ENCODE measurements at regions of chr3 and their contacts with region 1.

Region 1: GRCh38 chr3:31981206-31982181 is at the starts of genes OSBPL10 and ZNF860:
- DNase-seq: peak; percentile 72
- H3K4me3 Mint-ChIP-seq: peak within 1 kb of the TSS; percentile 88
- H3K27ac Mint-ChIP-seq: peak within 1 kb of the TSS; percentile 74
- H3K4me1 Mint-ChIP-seq: peaks cover 28% of the 10 kb centered on the region
- H3K27me3 Mint-ChIP-seq: peaks cover 19% of the 10 kb centered on the region
- total RNA-seq, gene OSBPL10: 14.5 and 14.9 TPM in 2 replicates
- total RNA-seq, gene ZNF860: 0.19 and 0.33 TPM in 2 replicates

Region 2: DNA sequence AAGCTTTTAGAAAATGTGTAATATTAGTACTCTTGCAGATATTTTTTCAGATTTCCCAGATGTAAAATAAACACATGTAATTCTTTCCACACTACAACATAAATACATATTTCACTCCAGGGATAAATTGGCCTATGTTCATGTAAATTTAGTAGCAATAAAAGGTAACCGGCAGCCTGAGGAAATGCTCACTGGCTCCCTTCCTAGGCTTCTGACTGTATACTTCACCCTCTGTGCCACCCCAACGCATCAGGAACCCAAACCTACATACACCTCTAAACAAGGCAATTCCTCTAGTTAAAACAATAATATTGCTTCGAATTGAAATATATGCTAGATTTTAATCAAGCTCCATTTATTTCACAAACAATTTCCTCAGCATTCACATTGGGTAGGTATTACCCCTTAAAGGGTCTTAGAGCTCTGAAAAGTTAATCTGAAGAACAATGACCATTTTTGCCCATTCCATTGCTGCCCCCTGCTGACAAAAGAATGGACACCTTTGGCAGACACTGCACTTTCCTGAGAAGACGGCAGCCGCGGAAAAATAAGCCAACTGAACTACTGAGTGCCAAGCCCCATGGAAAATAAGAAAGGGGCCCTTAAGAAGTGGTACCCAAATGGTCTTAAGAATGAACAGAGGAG is 212.9 kb before region 1 on chr3:
- intact Hi-C with region 1: loop called (anchors 2 kb)
- DNase-seq: peak; percentile 88
- H3K4me3 Mint-ChIP-seq: peak overlapping the region; percentile 9
- H3K27ac Mint-ChIP-seq: no peak overlapping the region
- H3K4me1 Mint-ChIP-seq: peaks cover 54% of the 10 kb centered on the region
- H3K27me3 Mint-ChIP-seq: no peaks in the 10 kb centered on the region

Region 3: DNA sequence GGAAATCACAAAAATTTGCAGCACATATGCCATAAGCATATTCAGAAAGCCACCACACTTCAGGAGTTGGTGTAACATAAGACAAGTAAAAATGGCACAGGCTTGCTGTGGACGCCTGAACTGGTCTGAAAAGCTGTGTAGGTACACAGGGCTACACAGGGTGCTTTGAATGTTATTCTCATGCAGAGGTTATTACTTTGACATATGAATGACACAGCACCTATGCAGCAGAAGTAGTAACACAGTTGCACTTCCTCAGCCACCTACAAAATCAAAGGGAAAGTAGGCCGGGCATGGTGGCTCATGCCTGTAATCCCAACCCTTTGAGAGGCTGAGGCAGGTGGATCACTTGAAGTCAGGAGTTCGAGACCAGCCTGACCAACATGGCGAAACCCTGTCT is 55.0 kb before region 1 on chr3:
- intact Hi-C with region 1: loop called (anchors 1 kb)
- DNase-seq: no peak
- H3K4me3 Mint-ChIP-seq: no peak overlapping the region
- H3K27ac Mint-ChIP-seq: peak overlapping the region; percentile 86
- H3K4me1 Mint-ChIP-seq: peaks cover 30% of the 10 kb centered on the region
- H3K27me3 Mint-ChIP-seq: no peaks in the 10 kb centered on the region

Region 4: GRCh38 chr3:32106280-32106928 is 124.9 kb after region 1 on chr3 and contains the start of gene GPD1L:
- intact Hi-C with region 1: loop called (anchors 2 kb)
- DNase-seq: peak; percentile 98
- H3K4me3 Mint-ChIP-seq: peak within 1 kb of the TSS; percentile 94
- H3K27ac Mint-ChIP-seq: peak within 1 kb of the TSS; percentile 90
- H3K4me1 Mint-ChIP-seq: peaks cover 32% of the 10 kb centered on the region
- H3K27me3 Mint-ChIP-seq: no peaks in the 10 kb centered on the region
- total RNA-seq, gene GPD1L: 19.0 and 20.0 TPM in 2 replicates

Region 5: GRCh38 chr3:32484436-32484835 is 502.9 kb after region 1 on chr3:
- intact Hi-C with region 1: no loop called
- DNase-seq: no peak
- H3K4me3 Mint-ChIP-seq: no peak overlapping the region
- H3K27ac Mint-ChIP-seq: no peak overlapping the region
- H3K4me1 Mint-ChIP-seq: peaks cover 13% of the 10 kb centered on the region
- H3K27me3 Mint-ChIP-seq: no peaks in the 10 kb centered on the region

Measured in activated CD4-positive, alpha-beta T cell treated with anti-CD3 and anti-CD28 coated beads, Interleukin-2, amount 10 ng/mL, durations not matched to agents 24 days and 14 days (primary cell).